Activated CD8-positive, alpha-beta T cell treated with anti-CD3 and anti-CD28 coated beads, Interleukin-2, amount 10 ng/mL, durations not matched to agents 7 days and 5 days (primary cell): ENCODE measurements at regions of chr9 and their contacts with region 1.

Region 1: DNA sequence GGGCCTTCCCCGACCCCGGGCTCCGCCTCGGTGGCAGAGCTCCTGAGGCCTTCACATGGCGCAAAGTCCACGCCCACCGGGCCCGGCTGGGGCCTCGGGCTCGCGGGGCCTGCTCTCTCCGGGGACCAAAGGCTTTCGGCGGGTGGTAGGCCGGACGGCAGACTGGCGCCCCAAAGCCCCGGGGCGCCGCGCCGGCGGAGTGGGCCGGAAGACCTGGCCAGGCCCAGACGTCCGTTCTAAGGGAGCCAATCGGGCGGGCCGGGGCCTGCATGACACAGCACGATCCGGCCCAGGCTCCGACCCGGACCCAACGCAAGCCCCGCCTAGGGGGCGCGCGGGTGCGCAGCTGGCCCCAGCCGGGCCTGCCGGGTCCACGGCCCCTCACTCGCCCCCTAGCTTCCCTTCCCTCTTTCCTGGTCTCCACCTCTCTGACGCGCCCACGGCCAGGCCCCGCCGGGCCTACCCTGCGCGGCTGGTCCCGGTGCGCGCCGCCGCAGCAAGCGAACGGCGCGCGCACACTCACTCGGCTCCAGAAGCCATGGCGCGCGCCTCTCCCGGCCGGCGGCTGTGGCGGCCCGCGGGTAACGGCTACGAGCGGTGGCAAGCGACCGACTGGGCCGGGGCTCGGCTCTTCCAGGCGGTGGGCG is 488 bp downstream of the VCP start:
- DNase-seq: peak; percentile 76
- ATAC-seq: peak; percentile 66
- H3K4me3 Mint-ChIP-seq: peak overlapping the region; percentile 92
- H3K27ac Mint-ChIP-seq: peak overlapping the region; percentile 96
- H3K4me1 Mint-ChIP-seq: peaks cover 54% of the 10 kb centered on the region
- H3K27me3 Mint-ChIP-seq: no peaks in the 10 kb centered on the region

Region 2: GRCh38 chr9:35096035-35096849 is 24.3 kb after region 1 on chr9 and contains the start of gene PIGO:
- CTCF ChIA-PET with region 1: interaction called, 111 read pairs
- POLR2A ChIA-PET with region 1: interaction called, 94 read pairs
- DNase-seq: peak; percentile 91
- ATAC-seq: peak; percentile 92
- H3K4me3 Mint-ChIP-seq: peak within 1 kb of the TSS; percentile 85
- H3K27ac Mint-ChIP-seq: peak within 1 kb of the TSS; percentile 92
- H3K4me1 Mint-ChIP-seq: peaks cover 44% of the 10 kb centered on the region
- H3K27me3 Mint-ChIP-seq: no peaks in the 10 kb centered on the region
- total RNA-seq, gene PIGO: 22.6 to 23.0 TPM

Region 3: DNA sequence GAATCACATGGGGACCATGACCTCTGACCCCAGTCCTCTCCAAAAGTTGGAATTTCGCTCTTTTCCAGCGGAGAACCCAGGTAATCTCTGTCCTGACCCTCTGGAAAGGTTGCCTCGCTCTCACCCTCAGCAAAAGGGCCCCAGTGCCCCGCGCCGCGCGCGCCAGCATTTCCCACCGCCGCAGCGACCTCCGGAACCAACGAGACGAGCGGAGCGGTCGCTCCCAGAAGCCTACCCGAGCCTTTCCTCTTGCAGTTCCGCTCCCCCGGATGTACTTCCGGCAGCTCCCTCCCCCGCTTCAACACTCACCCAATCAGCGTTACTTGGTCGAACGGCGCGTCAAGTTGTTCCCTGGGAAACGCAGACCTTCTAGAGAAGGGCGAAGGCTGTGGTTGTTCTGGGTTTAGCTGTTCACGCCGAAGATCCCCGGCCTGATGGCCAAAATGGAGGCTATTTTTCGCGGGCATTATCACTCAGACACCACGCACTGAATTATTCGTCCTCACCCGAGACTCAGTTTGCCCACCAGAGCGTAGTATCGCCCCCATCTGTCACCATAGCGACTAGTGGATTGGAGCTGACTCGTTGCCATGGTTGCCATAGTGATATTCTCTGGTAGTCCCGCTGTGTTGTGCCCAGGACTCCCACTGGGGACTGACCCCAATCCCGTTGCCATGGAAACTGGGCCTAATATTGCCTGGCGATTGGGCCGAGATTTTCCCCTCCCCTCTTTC is 31.2 kb after region 1 on chr9 and contains the start of gene STOML2:
- CTCF ChIA-PET with region 1: interaction called, 111 read pairs
- POLR2A ChIA-PET with region 1: interaction called, 94 read pairs
- DNase-seq: peak; percentile 96
- ATAC-seq: peak; percentile 93
- H3K4me3 Mint-ChIP-seq: peak within 1 kb of the TSS; percentile 97
- H3K27ac Mint-ChIP-seq: peak within 1 kb of the TSS; percentile 96
- H3K4me1 Mint-ChIP-seq: peaks cover 40% of the 10 kb centered on the region
- H3K27me3 Mint-ChIP-seq: no peaks in the 10 kb centered on the region
- total RNA-seq, gene STOML2: 130 to 138 TPM

Region 4: GRCh38 chr9:35111001-35111933 is 39.3 kb after region 1 on chr9:
- CTCF ChIA-PET with region 1: interaction called, 3 read pairs
- POLR2A ChIA-PET with region 1: interaction called, 10 read pairs
- DNase-seq: peak; percentile 98
- ATAC-seq: peak; percentile 67
- H3K4me3 Mint-ChIP-seq: peak overlapping the region; percentile 69
- H3K27ac Mint-ChIP-seq: peak overlapping the region; percentile 61
- H3K4me1 Mint-ChIP-seq: peaks cover 52% of the 10 kb centered on the region
- H3K27me3 Mint-ChIP-seq: no peaks in the 10 kb centered on the region